ENCODE measurements at regions of chr5 and their contacts with region 1.

Region 1: DNA sequence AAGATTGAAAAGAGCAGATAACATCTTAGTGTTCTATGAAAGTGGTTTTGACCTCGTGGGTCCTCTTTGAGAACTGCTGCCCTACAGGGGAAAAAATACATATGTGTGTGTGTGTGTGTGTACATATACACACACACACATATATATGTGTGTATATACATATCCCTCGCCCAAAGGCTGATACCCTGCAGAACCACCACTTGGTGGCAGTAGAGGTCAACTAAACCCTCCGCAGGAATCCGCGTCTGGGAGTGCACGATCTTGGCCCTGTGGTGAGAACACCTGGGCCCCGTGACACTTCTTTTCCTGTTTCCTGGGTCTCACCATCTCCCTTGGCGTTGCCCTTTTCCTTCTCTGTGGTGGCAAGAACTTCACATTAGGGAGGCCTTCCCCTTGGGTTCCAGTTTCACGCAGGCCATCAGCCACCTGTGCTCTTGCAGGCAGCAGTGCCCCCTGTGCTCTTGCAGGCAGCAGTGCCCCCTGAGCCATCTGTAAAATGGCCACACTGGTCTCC is 8.2 kb downstream of the IL9 start:
- DNase-seq: peak in 7 of 10 donors; percentile 47 to 66 (median 58)
- H3K4me3 ChIP-seq: no peak overlapping the region
- H3K27ac ChIP-seq: no peak overlapping the region
- H3K27me3 ChIP-seq: peaks cover 0 to 14% (median 0%) of the 10 kb centered on the region in 45 donors
- CTCF ChIP-seq: peak; percentile 42 to 93 (median 82)

Region 2: GRCh38 chr5:135560858-135561257 is 326.6 kb before region 1 on chr5:
- intact Hi-C with region 1: loop called in 1 of 2 experiments (anchors 5 kb)
- DNase-seq: peak; percentile 66 to 88 (median 82)
- H3K4me3 ChIP-seq: peak overlapping the region in 16 of 59 donors; percentile 6 to 47 (median 20)
- H3K27ac ChIP-seq: no peak overlapping the region
- H3K27me3 ChIP-seq: peaks cover 0 to 30% (median 8%) of the 10 kb centered on the region in 45 donors
- CTCF ChIP-seq: peak; percentile 63 to 97 (median 91)

Region 3: GRCh38 chr5:135829681-135830383 is 57.6 kb before region 1 on chr5:
- intact Hi-C with region 1: loop called in 1 of 2 experiments (anchors 5 kb)
- DNase-seq: peak in 9 of 10 donors; percentile 74 to 88 (median 83)
- H3K4me3 ChIP-seq: no peak overlapping the region
- H3K27ac ChIP-seq: no peak overlapping the region
- H3K27me3 ChIP-seq: peaks cover 0 to 24% (median 0%) of the 10 kb centered on the region in 45 donors
- CTCF ChIP-seq: peak; percentile 63 to 95 (median 84)

Region 4: GRCh38 chr5:135851186-135851914 is 36.1 kb before region 1 on chr5:
- intact Hi-C with region 1: no loop called
- DNase-seq: peak in 7 of 10 donors; percentile 24 to 78 (median 68)
- H3K4me3 ChIP-seq: peak overlapping the region in 7 of 59 donors; percentile 10 to 36 (median 22)
- H3K27ac ChIP-seq: peak overlapping the region in 52 of 59 donors; percentile 20 to 92 (median 75)
- H3K27me3 ChIP-seq: peaks cover 0 to 4% (median 0%) of the 10 kb centered on the region in 45 donors
- CTCF ChIP-seq: peak in 1 of 56 donors; percentile 8

Region 5: DNA sequence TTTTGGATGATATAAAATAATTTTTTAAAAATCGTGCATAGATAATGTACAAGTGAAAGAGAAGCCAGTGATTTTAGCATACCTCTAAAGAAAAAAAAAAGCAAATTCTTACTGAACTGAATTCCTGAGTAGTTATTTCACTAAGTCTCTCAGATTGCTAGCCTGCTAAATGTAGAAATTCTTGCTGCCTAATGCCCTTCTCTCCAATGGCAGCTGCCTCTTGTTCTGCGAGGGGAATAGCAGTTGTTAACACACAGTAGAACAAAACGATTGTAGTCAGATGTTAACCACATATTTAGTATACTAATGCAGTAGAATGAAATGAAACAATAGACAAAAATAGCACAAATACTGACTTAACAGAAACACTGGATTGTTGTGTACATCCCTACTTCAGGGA is 272.0 kb after region 1 on chr5:
- intact Hi-C with region 1: no loop called
- DNase-seq: no peak
- H3K4me3 ChIP-seq: peak overlapping the region in 1 of 59 donors; percentile 3
- H3K27ac ChIP-seq: peak overlapping the region in 35 of 59 donors; percentile 2 to 80 (median 26)
- H3K27me3 ChIP-seq: no peaks in the 10 kb centered on the region
- CTCF ChIP-seq: no peak

Region 6: DNA sequence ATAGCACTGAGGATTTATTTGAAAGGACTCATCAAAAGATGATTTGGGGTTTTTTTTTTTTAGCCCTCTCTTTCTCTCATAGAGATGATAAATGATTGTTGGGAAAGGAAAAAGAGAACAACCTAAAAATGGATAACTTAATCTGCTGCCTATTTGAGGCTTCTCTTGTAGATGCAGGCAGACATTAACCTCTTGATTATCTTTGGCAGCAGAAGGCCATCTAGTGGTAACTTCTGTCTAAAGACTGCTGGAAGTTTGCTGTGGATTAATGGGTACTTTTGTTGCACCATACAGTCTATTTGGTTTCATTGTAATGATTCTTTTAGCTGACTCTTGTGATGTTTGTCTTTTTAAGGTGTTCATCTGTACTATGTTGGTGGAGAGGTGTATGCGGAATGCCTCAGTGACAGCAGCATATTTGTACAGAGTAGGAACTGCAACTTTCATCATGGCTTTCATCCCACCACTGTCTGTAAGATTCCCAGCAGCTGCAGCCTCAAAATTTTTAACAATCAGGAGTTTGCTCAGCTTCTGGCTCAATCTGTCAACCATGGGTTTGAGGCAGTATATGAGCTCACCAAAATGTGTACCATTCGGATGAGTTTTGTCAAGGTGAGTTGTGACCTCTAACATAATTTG is 286.7 kb after region 1 on chr5:
- intact Hi-C with region 1: loop called in 1 of 2 experiments (anchors 5 kb)
- DNase-seq: no peak
- H3K4me3 ChIP-seq: no peak overlapping the region
- H3K27ac ChIP-seq: no peak overlapping the region
- H3K27me3 ChIP-seq: no peaks in the 10 kb centered on the region
- CTCF ChIP-seq: peak in 55 of 56 donors; percentile 34 to 86 (median 73)

Region 7: DNA sequence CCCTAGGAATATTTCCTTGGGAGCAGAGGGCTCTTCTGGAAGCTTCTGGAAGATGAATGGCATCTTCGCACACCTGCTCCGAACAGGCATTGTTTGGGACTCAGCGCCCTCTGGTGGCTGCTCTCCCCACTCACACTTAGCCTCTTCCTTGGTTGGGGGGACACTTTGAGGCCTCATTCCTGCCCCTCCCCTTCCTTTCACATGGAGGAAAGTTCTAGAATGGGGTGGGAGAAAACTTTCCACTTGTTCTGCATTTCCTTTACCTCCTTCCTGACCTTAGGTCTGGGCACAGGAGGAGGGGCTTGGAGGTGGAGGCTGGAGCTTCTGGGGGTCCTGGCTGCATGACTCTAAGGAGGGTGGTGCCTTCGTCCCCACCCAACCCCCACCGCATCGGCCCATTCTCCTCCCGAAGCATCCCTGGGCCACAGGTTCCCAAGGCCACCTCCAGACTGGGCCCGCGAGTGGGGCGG is 324.9 kb after region 1 on chr5:
- intact Hi-C with region 1: loop called (anchors 2 to 5 kb)
- DNase-seq: peak in 6 of 10 donors; percentile 31 to 56 (median 50)
- H3K4me3 ChIP-seq: no peak overlapping the region
- H3K27ac ChIP-seq: no peak overlapping the region
- H3K27me3 ChIP-seq: peaks cover 0 to 25% (median 2%) of the 10 kb centered on the region in 45 donors
- CTCF ChIP-seq: peak; percentile 64 to 97 (median 90)

Region 8: DNA sequence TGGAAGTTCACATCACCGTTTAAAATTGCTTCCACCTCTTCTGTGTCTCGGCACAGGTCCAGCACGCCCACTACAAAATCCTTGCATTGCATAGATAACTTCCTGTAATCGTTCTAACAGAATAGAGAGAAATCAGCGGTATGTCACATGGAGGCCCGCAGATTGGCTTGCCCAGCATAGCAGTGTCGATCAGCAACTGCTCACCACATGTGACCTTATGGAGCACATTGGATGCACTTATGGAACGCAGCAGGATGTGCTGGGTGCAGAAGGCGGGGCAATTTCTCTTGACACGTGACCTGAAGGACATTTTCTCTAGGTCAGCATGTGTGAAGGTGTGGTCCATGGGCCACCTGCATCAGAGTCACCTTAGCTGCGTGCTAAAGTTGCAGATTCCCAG is 428.3 kb after region 1 on chr5:
- intact Hi-C with region 1: no loop called
- DNase-seq: no peak
- H3K4me3 ChIP-seq: no peak overlapping the region
- H3K27ac ChIP-seq: no peak overlapping the region
- H3K27me3 ChIP-seq: peaks cover 0 to 16% (median 0%) of the 10 kb centered on the region in 45 donors
- CTCF ChIP-seq: no peak

Measured in dorsolateral prefrontal cortex (tissue), 120 donors.